ENCODE measurements at regions of chr1 and their contacts with region 1.

Region 1: DNA sequence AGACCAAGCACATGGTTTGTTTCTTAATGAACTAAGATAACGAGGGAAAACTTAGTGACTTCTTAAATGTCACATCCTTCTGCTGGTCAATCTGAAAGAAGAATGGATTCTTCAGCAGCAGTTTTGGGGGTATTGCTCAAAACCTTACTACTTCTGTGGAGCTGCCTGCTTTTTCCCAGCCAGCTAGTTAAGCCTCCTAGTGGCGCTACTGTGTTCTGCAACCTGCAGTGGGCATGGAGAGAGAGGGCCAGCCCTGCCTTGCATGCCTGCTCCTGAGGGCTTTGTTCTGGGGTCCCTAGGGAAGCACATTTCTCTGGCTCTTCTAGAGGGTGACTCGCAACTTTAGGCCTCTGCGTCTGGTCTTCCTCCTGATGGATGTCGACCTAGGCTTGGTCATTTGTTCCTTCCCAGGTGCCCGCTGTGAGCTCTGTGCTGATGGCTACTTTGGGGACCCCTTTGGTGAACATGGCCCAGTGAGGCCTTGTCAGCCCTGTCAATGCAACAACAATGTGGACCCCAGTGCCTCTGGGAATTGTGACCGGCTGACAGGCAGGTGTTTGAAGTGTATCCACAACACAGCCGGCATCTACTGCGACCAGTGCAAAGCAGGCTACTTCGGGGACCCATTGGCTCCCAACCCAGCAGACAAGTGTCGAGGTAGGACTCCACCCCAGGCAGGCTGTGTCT is 42.0 kb downstream of the LAMC2 start:
- DNase-seq: peak; percentile 41 to 88
- H3K4me3 ChIP-seq: no peak overlapping the region
- H3K27ac ChIP-seq: no peak overlapping the region
- H3K4me1 ChIP-seq: peaks cover 0 to 11% (median 5%) of the 10 kb centered on the region in 4 experiments; a peak in 6 of 7 replicates
- H3K27me3 ChIP-seq: no peaks in the 10 kb centered on the region
- CTCF ChIP-seq: peak; percentile 75 to 91 (median 86)
- EP300 ChIP-seq: no peak
- POLR2A ChIP-seq: no peak
- RAD21 ChIP-seq: peak; percentile 74 to 84

Region 2: DNA sequence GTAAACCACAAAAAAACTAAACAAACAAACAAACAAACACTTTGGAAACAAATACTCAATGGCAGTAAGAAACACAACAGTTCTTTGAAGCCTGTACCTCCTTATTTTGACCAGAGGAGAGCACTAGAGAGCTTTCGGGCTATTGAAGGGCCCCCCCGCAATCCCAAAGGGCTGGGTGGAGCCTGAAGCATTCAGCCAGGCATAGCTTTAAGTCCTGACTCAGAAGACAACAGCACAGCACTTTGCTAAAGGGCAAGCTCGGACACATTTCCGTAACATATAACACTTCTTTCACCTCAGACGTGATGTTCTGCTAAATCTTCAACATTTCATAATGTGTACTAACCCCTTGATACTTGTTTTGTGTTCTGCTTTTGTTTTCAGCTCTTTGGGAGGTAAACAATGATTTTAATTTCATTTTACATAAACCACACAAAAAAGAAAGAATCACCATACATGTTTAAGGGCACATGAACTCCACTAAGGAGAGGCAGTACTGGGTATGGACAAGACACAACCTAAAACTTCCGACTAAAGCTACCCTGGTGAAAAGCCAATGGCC is 265.5 kb before region 1 on chr1:
- CTCF ChIA-PET with region 1: interaction called, 67 read pairs
- POLR2A ChIA-PET with region 1: no interaction called
- DNase-seq: peak in 1 of 2 experiments; percentile 63
- H3K4me3 ChIP-seq: no peak overlapping the region; a peak in 1 of 8 replicates
- H3K27ac ChIP-seq: no peak overlapping the region
- H3K4me1 ChIP-seq: peaks cover 4 to 9% (median 4%) of the 10 kb centered on the region in 4 experiments; a peak in 5 of 7 replicates
- H3K27me3 ChIP-seq: no peaks in the 10 kb centered on the region
- CTCF ChIP-seq: peak; percentile 18 to 87 (median 85)
- EP300 ChIP-seq: no peak
- POLR2A ChIP-seq: no peak; a peak in 1 of 3 replicates
- RAD21 ChIP-seq: peak; percentile 96 to 98

Region 3: DNA sequence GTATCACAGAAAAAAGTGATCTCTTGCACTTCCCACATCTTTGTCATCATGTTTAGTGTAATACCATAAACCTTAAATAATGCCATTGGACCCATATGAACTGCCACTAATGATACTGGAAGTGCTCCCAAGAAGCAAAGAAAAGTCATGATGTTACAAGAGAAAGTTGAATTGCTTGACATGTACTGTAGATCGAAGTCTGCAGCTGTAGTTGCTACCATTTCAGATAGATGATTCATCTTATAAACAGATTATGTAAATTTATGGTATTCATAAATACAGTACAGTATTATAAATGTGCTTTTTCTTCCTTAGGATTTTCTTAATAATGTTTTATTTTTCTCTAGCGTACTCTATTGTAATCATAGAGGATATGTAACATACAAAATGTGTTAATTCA is 72.2 kb before region 1 on chr1:
- CTCF ChIA-PET with region 1: no interaction called
- POLR2A ChIA-PET with region 1: no interaction called
- DNase-seq: no peak
- H3K4me3 ChIP-seq: no peak overlapping the region
- H3K27ac ChIP-seq: no peak overlapping the region
- H3K4me1 ChIP-seq: no peaks in the 10 kb centered on the region
- H3K27me3 ChIP-seq: no peaks in the 10 kb centered on the region
- CTCF ChIP-seq: no peak
- EP300 ChIP-seq: no peak
- POLR2A ChIP-seq: no peak
- RAD21 ChIP-seq: no peak

Region 4: GRCh38 chr1:183185941-183186490 is 42.1 kb before region 1 on chr1 and contains the start of gene LAMC2:
- CTCF ChIA-PET with region 1: interaction called, 14 read pairs
- POLR2A ChIA-PET with region 1: no interaction called
- DNase-seq: peak; percentile 70 to 85
- H3K4me3 ChIP-seq: peak within 1 kb of the TSS; percentile 46 to 71 (median 62)
- H3K27ac ChIP-seq: peak within 1 kb of the TSS; percentile 27; the same call in 1 of the 2 replicates
- H3K4me1 ChIP-seq: peaks cover 0 to 6% (median 4%) of the 10 kb centered on the region in 4 experiments; a peak in 4 of 7 replicates
- H3K27me3 ChIP-seq: no peaks in the 10 kb centered on the region
- CTCF ChIP-seq: peak; percentile 25 to 50 (median 46)
- EP300 ChIP-seq: no peak
- POLR2A ChIP-seq: peak in 1 of 2 experiments; percentile 75; a peak in 2 of 3 replicates
- RAD21 ChIP-seq: peak; percentile 42 to 46
- total RNA-seq, gene LAMC2: 12.9 and 13.0 TPM in 2 replicates

Region 5: GRCh38 chr1:183205196-183205781 is 22.8 kb before region 1 on chr1:
- CTCF ChIA-PET with region 1: interaction called, 18 read pairs
- POLR2A ChIA-PET with region 1: no interaction called
- DNase-seq: no peak
- H3K4me3 ChIP-seq: no peak overlapping the region
- H3K27ac ChIP-seq: no peak overlapping the region
- H3K4me1 ChIP-seq: no peaks in the 10 kb centered on the region
- H3K27me3 ChIP-seq: no peaks in the 10 kb centered on the region
- CTCF ChIP-seq: no peak
- EP300 ChIP-seq: no peak
- POLR2A ChIP-seq: no peak
- RAD21 ChIP-seq: no peak

Region 6: GRCh38 chr1:183244466-183244865 is 16.4 kb after region 1 on chr1:
- CTCF ChIA-PET with region 1: interaction called, 51 read pairs
- POLR2A ChIA-PET with region 1: interaction called, 3 read pairs
- DNase-seq: no peak
- H3K4me3 ChIP-seq: no peak overlapping the region
- H3K27ac ChIP-seq: no peak overlapping the region
- H3K4me1 ChIP-seq: peaks cover 0 to 3% (median 1%) of the 10 kb centered on the region in 4 experiments; a peak in 2 of 7 replicates
- H3K27me3 ChIP-seq: no peaks in the 10 kb centered on the region
- CTCF ChIP-seq: no peak
- EP300 ChIP-seq: no peak
- POLR2A ChIP-seq: no peak
- RAD21 ChIP-seq: no peak

Region 7: GRCh38 chr1:183259886-183260285 is 31.8 kb after region 1 on chr1:
- CTCF ChIA-PET with region 1: interaction called, 13 read pairs
- POLR2A ChIA-PET with region 1: no interaction called
- DNase-seq: no peak
- H3K4me3 ChIP-seq: no peak overlapping the region
- H3K27ac ChIP-seq: no peak overlapping the region
- H3K4me1 ChIP-seq: peaks cover 0 to 6% (median 0%) of the 10 kb centered on the region in 4 experiments; a peak in 2 of 7 replicates
- H3K27me3 ChIP-seq: no peaks in the 10 kb centered on the region
- CTCF ChIP-seq: no peak
- EP300 ChIP-seq: no peak
- POLR2A ChIP-seq: no peak
- RAD21 ChIP-seq: no peak

Measured in H1 (cell line).